Left cardiac atrium (tissue), 4 donors: ENCODE measurements at regions of chr2 and their contacts with region 1.

Region 1: GRCh38 chr2:227106845-227107759 is 56.9 kb downstream of the COL4A4 start:
- DNase-seq: no peak
- ATAC-seq: peak; percentile 42 to 72

Region 2: GRCh38 chr2:225668606-225669266 is 1438.4 kb before region 1 on chr2:
- intact Hi-C with region 1: loop called (anchors 2 to 10 kb)
- DNase-seq: no peak
- ATAC-seq: peak; percentile 61 to 68

Region 3: GRCh38 chr2:227179988-227180685 is 73.0 kb after region 1 on chr2:
- intact Hi-C with region 1: no loop called
- DNase-seq: peak; percentile 49
- ATAC-seq: peak; percentile 86

Region 4: GRCh38 chr2:227335713-227336112 is 228.6 kb after region 1 on chr2:
- intact Hi-C with region 1: no loop called
- DNase-seq: no peak
- ATAC-seq: no peak

Region 5: GRCh38 chr2:227351639-227352038 is 244.5 kb after region 1 on chr2:
- intact Hi-C with region 1: no loop called
- DNase-seq: no peak
- ATAC-seq: no peak

Region 6: GRCh38 chr2:227996366-227996765 is 889.3 kb after region 1 on chr2:
- intact Hi-C with region 1: no loop called
- DNase-seq: no peak
- ATAC-seq: no peak